ENCODE measurements at regions of chr3 and their contacts with region 1.

Region 1: GRCh38 chr3:126982471-126983175 is at the start of gene PLXNA1:
- DNase-seq: peak; percentile 71 to 83
- ATAC-seq: peak; percentile 76 to 89 (median 81)
- H3K4me3 ChIP-seq: peak within 1 kb of the TSS; percentile 70 to 87 (median 76)
- H3K27ac ChIP-seq: peak within 1 kb of the TSS in 9 of 10 donors; percentile 59 to 93 (median 73)
- H3K4me1 ChIP-seq: peaks cover 18 to 50% (median 41%) of the 10 kb centered on the region in 9 donors
- H3K27me3 ChIP-seq: peaks cover 0 to 39% (median 0%) of the 10 kb centered on the region in 7 donors
- CTCF ChIP-seq: peak; percentile 81 to 94 (median 89)
- total RNA-seq, gene PLXNA1: 19.0 to 29.7 (median 25.1) TPM

Region 2: DNA sequence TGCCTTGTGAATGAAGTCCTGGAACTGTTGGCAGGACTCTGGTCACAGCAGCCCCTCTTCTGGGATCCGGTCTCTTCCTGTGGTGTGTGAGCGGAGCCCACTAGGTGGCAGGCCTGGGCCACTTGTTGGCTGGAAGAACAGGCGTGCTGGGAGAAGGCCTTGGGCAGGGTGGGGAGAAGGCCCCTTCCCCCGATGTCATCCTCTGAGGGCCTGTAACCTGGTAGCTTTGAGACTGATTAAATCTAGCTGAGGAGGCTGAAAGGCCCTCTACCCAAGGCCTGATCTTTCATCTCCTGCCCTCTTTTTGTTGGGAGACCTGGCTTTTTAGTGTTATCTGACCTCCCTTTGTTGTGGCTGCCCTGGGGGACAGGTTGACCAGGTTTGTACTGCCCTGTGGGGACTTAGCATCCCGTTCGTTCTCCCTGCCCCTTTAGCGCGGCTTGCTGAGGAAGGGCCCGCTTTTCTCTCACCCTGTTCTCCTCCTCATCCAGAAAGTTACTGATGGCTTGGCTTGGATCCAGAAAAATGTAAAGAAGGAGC is 230.2 kb before region 1 on chr3:
- intact Hi-C with region 1: loop called in 9 of 10 experiments (anchors 1 to 5 kb)
- DNase-seq: peak; percentile 79 to 80
- ATAC-seq: peak; percentile 87 to 94 (median 91)
- H3K4me3 ChIP-seq: no peak overlapping the region
- H3K27ac ChIP-seq: no peak overlapping the region
- H3K4me1 ChIP-seq: peaks cover 0 to 40% (median 4%) of the 10 kb centered on the region in 9 donors
- H3K27me3 ChIP-seq: no peaks in the 10 kb centered on the region
- CTCF ChIP-seq: peak; percentile 66 to 93 (median 87)

Region 3: GRCh38 chr3:126932188-126932968 is 50.2 kb before region 1 on chr3:
- intact Hi-C with region 1: no loop called
- DNase-seq: peak in 1 of 2 donors; percentile 28
- ATAC-seq: peak in 7 of 8 donors; percentile 32 to 62 (median 48)
- H3K4me3 ChIP-seq: no peak overlapping the region
- H3K27ac ChIP-seq: peak overlapping the region in 3 of 10 donors; percentile 14 to 34 (median 27)
- H3K4me1 ChIP-seq: peaks cover 6 to 36% (median 24%) of the 10 kb centered on the region in 9 donors
- H3K27me3 ChIP-seq: peaks cover 0 to 31% (median 14%) of the 10 kb centered on the region in 7 donors
- CTCF ChIP-seq: no peak

Region 4: GRCh38 chr3:127052121-127052561 is 69.5 kb after region 1 on chr3:
- intact Hi-C with region 1: no loop called
- DNase-seq: peak; percentile 35 to 77
- ATAC-seq: peak; percentile 82 to 97 (median 91)
- H3K4me3 ChIP-seq: no peak overlapping the region
- H3K27ac ChIP-seq: no peak overlapping the region
- H3K4me1 ChIP-seq: peaks cover 0 to 28% (median 4%) of the 10 kb centered on the region in 9 donors
- H3K27me3 ChIP-seq: no peaks in the 10 kb centered on the region
- CTCF ChIP-seq: no peak

Region 5: DNA sequence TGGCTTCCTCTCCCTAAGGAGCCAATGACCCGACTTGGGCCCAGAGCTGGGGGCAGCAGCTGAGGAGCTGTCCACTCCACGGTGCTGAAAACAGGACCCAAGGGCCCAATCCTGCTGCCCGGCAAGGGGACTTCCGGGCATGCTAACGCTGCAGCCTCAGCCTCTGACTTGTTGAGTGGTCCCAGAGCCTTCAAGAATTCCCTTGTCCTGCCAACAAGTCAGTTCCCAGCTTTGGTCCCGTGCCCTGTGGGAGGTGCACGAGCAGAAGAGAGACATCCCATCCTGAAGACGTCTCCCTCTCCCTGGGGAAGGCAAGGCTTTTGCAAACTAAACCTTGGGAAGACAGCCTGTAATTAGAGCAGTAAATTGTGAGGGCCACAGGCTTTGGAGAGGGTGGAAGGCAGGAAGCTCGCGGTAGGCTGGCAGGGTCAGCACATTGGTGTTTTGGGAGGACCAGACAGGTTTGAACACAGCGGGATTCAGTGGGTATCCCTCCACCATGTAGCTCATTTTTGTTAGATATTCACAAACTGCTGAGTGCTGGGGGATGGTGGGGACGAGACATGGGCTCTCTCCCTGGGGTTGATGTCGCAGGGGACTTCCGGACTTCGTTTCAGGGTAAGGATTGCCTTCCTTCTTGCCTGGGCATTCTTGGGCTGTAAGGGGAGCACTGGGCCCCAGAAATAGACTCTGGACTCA is 180.5 kb after region 1 on chr3:
- intact Hi-C with region 1: loop called in 1 of 10 experiments (anchors 10 kb)
- DNase-seq: no peak
- ATAC-seq: no peak
- H3K4me3 ChIP-seq: no peak overlapping the region
- H3K27ac ChIP-seq: no peak overlapping the region
- H3K4me1 ChIP-seq: peaks cover 0 to 3% (median 0%) of the 10 kb centered on the region in 9 donors
- H3K27me3 ChIP-seq: peaks cover 0 to 31% (median 9%) of the 10 kb centered on the region in 7 donors
- CTCF ChIP-seq: no peak

Region 6: GRCh38 chr3:127448161-127448561 is 465.5 kb after region 1 on chr3:
- intact Hi-C with region 1: loop called in 2 of 10 experiments (anchors 10 kb)
- DNase-seq: no peak
- ATAC-seq: peak in 4 of 8 donors; percentile 24 to 46 (median 36)
- H3K4me3 ChIP-seq: no peak overlapping the region
- H3K27ac ChIP-seq: no peak overlapping the region
- H3K4me1 ChIP-seq: no peaks in the 10 kb centered on the region
- H3K27me3 ChIP-seq: peaks cover 0 to 43% (median 20%) of the 10 kb centered on the region in 7 donors
- CTCF ChIP-seq: peak in 3 of 9 donors; percentile 16 to 27 (median 16)

Region 7: GRCh38 chr3:127544192-127544802 is 561.7 kb after region 1 on chr3:
- intact Hi-C with region 1: loop called in 3 of 10 experiments (anchors 10 kb)
- DNase-seq: peak; percentile 68 to 71
- ATAC-seq: peak in 7 of 8 donors; percentile 3 to 51 (median 45)
- H3K4me3 ChIP-seq: no peak overlapping the region
- H3K27ac ChIP-seq: no peak overlapping the region
- H3K4me1 ChIP-seq: peaks cover 0 to 21% (median 13%) of the 10 kb centered on the region in 9 donors
- H3K27me3 ChIP-seq: no peaks in the 10 kb centered on the region
- CTCF ChIP-seq: peak; percentile 63 to 85 (median 78)

Measured in heart right ventricle (tissue), 16 donors.